ENCODE measurements at regions of chr12 and their contacts with region 1.

Region 1: GRCh38 chr12:3073438-3074250 is 3.5 kb upstream of the TSPAN9 start:
- DNase-seq: peak; percentile 84
- H3K4me3 Mint-ChIP-seq: no peak overlapping the region
- H3K27ac Mint-ChIP-seq: no peak overlapping the region
- H3K4me1 Mint-ChIP-seq: no peaks in the 10 kb centered on the region
- H3K27me3 Mint-ChIP-seq: peaks cover under 1% of the 10 kb centered on the region
- CTCF ChIP-seq: peak; percentile 95

Region 2: GRCh38 chr12:3091382-3092241 is 18.0 kb after region 1 on chr12:
- CTCF ChIA-PET with region 1: interaction called, 13 read pairs
- POLR2A ChIA-PET with region 1: no interaction called
- intact Hi-C with region 1: no loop called
- DNase-seq: no peak
- H3K4me3 Mint-ChIP-seq: no peak overlapping the region
- H3K27ac Mint-ChIP-seq: no peak overlapping the region
- H3K4me1 Mint-ChIP-seq: peaks cover 5% of the 10 kb centered on the region
- H3K27me3 Mint-ChIP-seq: no peaks in the 10 kb centered on the region
- CTCF ChIP-seq: no peak

Region 3: GRCh38 chr12:3110578-3110977 is 36.9 kb after region 1 on chr12:
- CTCF ChIA-PET with region 1: interaction called, 26 read pairs
- POLR2A ChIA-PET with region 1: no interaction called
- intact Hi-C with region 1: no loop called
- DNase-seq: no peak
- H3K4me3 Mint-ChIP-seq: no peak overlapping the region
- H3K27ac Mint-ChIP-seq: no peak overlapping the region
- H3K4me1 Mint-ChIP-seq: peaks cover 7% of the 10 kb centered on the region
- H3K27me3 Mint-ChIP-seq: no peaks in the 10 kb centered on the region
- CTCF ChIP-seq: no peak

Region 4: GRCh38 chr12:3135522-3136461 is 62.1 kb after region 1 on chr12:
- CTCF ChIA-PET with region 1: interaction called, 54 read pairs
- POLR2A ChIA-PET with region 1: no interaction called
- intact Hi-C with region 1: loop called (anchors 1 kb)
- DNase-seq: peak; percentile 79
- H3K4me3 Mint-ChIP-seq: no peak overlapping the region
- H3K27ac Mint-ChIP-seq: no peak overlapping the region
- H3K4me1 Mint-ChIP-seq: peaks cover 5% of the 10 kb centered on the region
- H3K27me3 Mint-ChIP-seq: no peaks in the 10 kb centered on the region
- CTCF ChIP-seq: peak; percentile 87

Region 5: DNA sequence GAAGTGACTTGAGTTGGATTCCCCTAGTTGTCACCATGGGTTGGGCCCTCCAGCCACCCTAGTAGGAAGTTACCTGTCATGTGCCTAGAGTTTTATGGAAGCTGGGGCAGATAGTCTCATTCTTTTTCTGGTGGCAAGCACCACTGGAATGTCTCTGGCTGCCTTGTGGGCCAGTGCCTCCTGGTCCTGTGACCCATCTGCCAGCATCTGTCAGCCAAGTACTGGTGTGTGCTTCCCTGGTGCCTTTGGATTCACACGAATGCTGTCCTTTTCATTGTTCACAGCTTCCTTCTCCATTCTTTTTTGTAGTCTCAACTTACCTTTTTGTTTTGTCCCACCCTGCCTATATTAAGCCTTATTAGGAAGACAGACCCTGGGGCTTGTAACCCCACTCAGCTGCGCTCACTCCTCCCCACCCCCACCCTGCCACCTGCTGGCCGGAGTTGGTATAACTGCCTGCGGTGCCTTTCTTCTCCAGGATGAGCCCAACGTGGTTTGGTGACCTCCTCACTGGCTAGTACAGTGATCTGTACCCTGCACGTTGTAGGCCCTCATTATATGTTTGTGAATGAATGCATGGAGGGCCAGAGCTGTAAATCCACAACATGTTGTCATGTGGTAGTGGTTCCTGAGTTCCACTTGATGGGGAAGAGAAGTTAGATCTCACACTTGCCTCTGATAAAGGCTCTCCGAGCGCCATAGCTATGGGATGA is 129.2 kb after region 1 on chr12:
- CTCF ChIA-PET with region 1: interaction called, 22 read pairs
- POLR2A ChIA-PET with region 1: no interaction called
- intact Hi-C with region 1: loop called (anchors 1 kb)
- DNase-seq: peak; percentile 54
- H3K4me3 Mint-ChIP-seq: no peak overlapping the region
- H3K27ac Mint-ChIP-seq: no peak overlapping the region
- H3K4me1 Mint-ChIP-seq: peaks cover 11% of the 10 kb centered on the region
- H3K27me3 Mint-ChIP-seq: no peaks in the 10 kb centered on the region
- CTCF ChIP-seq: peak; percentile 93

Region 6: GRCh38 chr12:3777206-3777809 is 703.7 kb after region 1 on chr12:
- CTCF ChIA-PET with region 1: interaction called, 3 read pairs
- POLR2A ChIA-PET with region 1: interaction called, 3 read pairs
- intact Hi-C with region 1: loop called (anchors 10 kb)
- DNase-seq: peak; percentile 58
- H3K4me3 Mint-ChIP-seq: no peak overlapping the region
- H3K27ac Mint-ChIP-seq: no peak overlapping the region
- H3K4me1 Mint-ChIP-seq: no peaks in the 10 kb centered on the region
- H3K27me3 Mint-ChIP-seq: no peaks in the 10 kb centered on the region
- CTCF ChIP-seq: peak; percentile 64

Measured in MCF 10A (cell line).